HEK293 (cell line): ENCODE measurements at regions of chr9 and their contacts with region 1.

Region 1: GRCh38 chr9:72038890-72039410 is 21.5 kb downstream of the C9orf57 start:
- H3K4me3 ChIP-seq: no peak overlapping the region
- H3K27ac ChIP-seq: no peak overlapping the region
- H3K4me1 ChIP-seq: 0 out of 2 replicates have a peak, but pooled peaks cover 3% of the 10 kb centered on the region
- CTCF ChIP-seq: peak; percentile 84

Region 2: GRCh38 chr9:71806901-71807307 is 232.0 kb before region 1 on chr9:
- CTCF ChIA-PET with region 1: interaction called, 11 read pairs
- POLR2A ChIA-PET with region 1: no interaction called
- H3K4me3 ChIP-seq: no peak overlapping the region
- H3K27ac ChIP-seq: no peak overlapping the region
- H3K4me1 ChIP-seq: no peaks in the 10 kb centered on the region
- CTCF ChIP-seq: peak; percentile 71; the same call in 1 of the 2 replicates

Region 3: DNA sequence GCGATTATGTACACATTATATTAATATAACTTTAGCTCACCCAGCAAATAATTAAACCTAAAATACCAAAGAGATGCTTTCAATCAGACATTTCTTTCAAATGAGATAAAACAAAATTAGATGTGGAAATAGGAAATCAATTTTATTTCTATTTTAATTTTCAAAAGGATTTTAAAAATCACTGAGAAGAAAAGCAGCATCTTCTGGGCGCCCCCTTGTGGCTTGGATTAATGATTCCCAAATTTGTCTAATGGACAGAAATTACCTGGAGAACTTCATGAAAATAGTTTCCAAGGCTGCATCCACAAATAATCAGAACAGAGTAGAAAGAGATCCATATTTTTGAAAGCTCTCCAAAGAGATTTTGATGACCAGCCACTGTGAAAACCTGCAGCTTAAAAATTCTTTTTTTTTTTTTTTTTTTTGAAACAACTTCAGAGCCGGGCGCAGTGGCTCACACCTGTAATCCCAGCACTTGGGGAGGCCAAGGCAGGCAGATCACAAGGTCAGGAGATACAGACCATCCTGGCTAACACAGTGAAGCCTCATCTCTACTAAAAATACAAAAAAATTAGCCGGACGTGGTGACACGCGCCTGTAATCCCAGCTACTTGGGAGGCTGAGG is 219.7 kb before region 1 on chr9:
- CTCF ChIA-PET with region 1: interaction called, 10 read pairs
- POLR2A ChIA-PET with region 1: no interaction called
- H3K4me3 ChIP-seq: no peak overlapping the region
- H3K27ac ChIP-seq: no peak overlapping the region
- H3K4me1 ChIP-seq: no peaks in the 10 kb centered on the region
- CTCF ChIP-seq: no peak

Region 4: GRCh38 chr9:72022841-72023240 is 16.1 kb before region 1 on chr9:
- CTCF ChIA-PET with region 1: interaction called, 25 read pairs
- POLR2A ChIA-PET with region 1: interaction called, 9 read pairs
- H3K4me3 ChIP-seq: no peak overlapping the region
- H3K27ac ChIP-seq: no peak overlapping the region
- H3K4me1 ChIP-seq: no peaks in the 10 kb centered on the region
- CTCF ChIP-seq: no peak

Region 5: DNA sequence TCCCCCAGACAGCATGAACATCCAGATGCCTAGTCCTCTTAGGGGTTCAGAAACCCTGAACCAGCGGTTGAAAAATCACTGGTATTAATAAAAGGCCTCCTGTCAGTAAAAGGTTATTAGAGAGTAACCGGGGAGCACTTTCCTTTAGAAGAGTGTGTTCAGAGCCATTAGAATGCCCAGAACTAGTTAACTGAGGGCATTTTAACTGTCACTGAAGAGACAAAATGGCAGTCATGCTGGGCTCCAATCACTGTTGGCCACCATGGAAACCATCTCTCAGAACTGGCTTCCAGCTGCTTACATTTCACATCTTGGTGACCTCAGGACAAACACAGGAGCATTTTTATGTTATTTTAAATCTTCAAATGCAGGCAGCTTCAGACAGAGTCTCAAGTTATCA is 74.1 kb after region 1 on chr9:
- CTCF ChIA-PET with region 1: no interaction called
- POLR2A ChIA-PET with region 1: no interaction called
- H3K4me3 ChIP-seq: no peak overlapping the region
- H3K27ac ChIP-seq: no peak overlapping the region
- H3K4me1 ChIP-seq: no peaks in the 10 kb centered on the region
- CTCF ChIP-seq: no peak

Region 6: DNA sequence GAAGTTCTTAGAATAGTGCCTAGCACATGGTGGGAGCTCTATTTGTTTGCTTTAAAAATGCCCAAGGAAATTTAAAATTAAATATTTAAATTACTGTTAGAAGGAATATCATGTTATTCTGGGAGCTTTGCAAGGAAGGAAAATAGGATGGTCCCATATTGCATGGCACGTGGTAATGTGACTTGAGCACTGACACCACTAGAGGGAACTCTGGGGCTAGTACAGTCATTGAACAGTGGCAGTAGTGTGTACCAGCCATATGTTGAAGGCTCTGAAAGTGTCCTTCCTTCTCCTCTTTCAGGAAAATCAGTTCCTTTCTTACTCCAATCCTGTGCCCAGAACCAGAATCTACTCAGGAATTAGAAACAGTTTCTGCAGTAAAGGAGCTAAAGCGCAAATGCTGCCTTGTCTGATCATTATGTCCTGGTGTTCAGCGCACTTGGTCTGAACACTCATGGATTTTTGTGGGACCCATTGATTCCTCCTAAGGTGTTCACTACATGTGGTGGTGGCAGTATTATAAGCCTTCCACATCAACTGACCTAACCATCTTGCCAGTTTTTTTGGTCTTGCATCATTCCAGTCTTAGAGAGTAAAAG is 164.4 kb after region 1 on chr9:
- CTCF ChIA-PET with region 1: interaction called, 11 read pairs
- POLR2A ChIA-PET with region 1: no interaction called
- H3K4me3 ChIP-seq: no peak overlapping the region
- H3K27ac ChIP-seq: no peak overlapping the region
- H3K4me1 ChIP-seq: no peaks in the 10 kb centered on the region
- CTCF ChIP-seq: peak; percentile 28; the same call in 1 of the 2 replicates

Region 7: GRCh38 chr9:72280913-72281500 is 242.1 kb after region 1 on chr9:
- CTCF ChIA-PET with region 1: interaction called, 210 read pairs
- POLR2A ChIA-PET with region 1: no interaction called
- H3K4me3 ChIP-seq: no peak overlapping the region
- H3K27ac ChIP-seq: no peak overlapping the region
- H3K4me1 ChIP-seq: no peaks in the 10 kb centered on the region
- CTCF ChIP-seq: peak; percentile 59; the same call in 1 of the 2 replicates